ENCODE measurements at regions of chr3 and their contacts with region 1.

Region 1: DNA sequence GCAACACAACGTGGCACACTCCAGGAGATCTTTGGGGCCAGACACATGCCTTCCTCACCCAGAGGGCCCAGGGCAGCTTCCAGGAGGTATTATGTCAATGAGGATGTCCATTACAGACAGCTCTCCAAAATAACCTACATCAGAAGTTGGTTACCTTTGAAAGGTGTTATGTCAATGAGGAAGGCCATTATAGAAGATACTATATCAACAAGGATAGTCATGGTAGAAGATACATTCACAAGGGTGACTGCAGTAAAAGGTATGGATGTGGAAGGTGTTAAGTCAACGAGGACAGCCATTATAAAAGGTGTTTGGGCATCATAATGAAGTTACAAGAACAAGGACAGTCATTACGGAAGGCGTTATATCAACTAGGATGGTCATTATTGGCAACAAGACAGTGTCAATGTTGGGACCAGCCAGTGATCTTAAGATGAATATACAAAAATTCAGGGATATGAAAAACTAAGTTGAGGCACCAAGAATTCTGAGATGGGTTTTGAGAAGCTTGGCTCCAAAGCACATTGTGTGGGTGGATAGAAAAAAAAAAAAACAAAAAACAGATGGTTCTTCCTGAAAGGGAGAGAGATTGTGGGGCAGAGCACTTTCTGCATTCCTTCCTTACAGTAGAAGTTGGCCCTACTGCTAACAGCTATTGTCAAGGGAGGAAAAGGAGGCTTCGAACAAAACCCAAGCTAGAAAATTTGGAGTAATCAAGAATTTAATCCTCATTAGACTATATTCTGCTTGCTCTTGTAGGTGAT is 11.2 kb downstream of the CDCP1 start:
- DNase-seq: no peak
- ATAC-seq: no peak
- H3K4me3 ChIP-seq: no peak overlapping the region
- H3K27ac ChIP-seq: peak overlapping the region; percentile 93
- H3K4me1 ChIP-seq: peaks cover 79% of the 10 kb centered on the region
- H3K27me3 ChIP-seq: no peaks in the 10 kb centered on the region
- CTCF ChIP-seq: no peak

Region 2: GRCh38 chr3:45105855-45106671 is 28.9 kb before region 1 on chr3:
- CTCF ChIA-PET with region 1: no interaction called
- POLR2A ChIA-PET with region 1: interaction called, 4 read pairs
- intact Hi-C with region 1: loop called (anchors 1 kb)
- DNase-seq: peak; percentile 92
- ATAC-seq: peak; percentile 92
- H3K4me3 ChIP-seq: no peak overlapping the region
- H3K27ac ChIP-seq: peak overlapping the region; percentile 93
- H3K4me1 ChIP-seq: peaks cover 26% of the 10 kb centered on the region
- H3K27me3 ChIP-seq: no peaks in the 10 kb centered on the region
- CTCF ChIP-seq: no peak

Measured in PC-3 (cell line).